ENCODE measurements at regions of chr13 and their contacts with region 1.

Region 1: GRCh38 chr13:40329657-40330485 is 336.6 kb downstream of the FOXO1 start:
- DNase-seq: no peak
- H3K4me3 ChIP-seq: no peak overlapping the region
- H3K27ac ChIP-seq: no peak overlapping the region
- H3K4me1 ChIP-seq: peaks cover 18% of the 10 kb centered on the region
- H3K27me3 ChIP-seq: no peaks in the 10 kb centered on the region
- CTCF ChIP-seq: no peak

Region 2: GRCh38 chr13:39577838-39578491 is 751.9 kb before region 1 on chr13:
- CTCF ChIA-PET with region 1: no interaction called
- dilution Hi-C with region 1: no loop called
- in situ Hi-C with region 1: no loop called
- intact Hi-C with region 1: no loop called
- DNase-seq: no peak
- H3K4me3 ChIP-seq: no peak overlapping the region
- H3K27ac ChIP-seq: no peak overlapping the region
- H3K4me1 ChIP-seq: no peaks in the 10 kb centered on the region
- H3K27me3 ChIP-seq: no peaks in the 10 kb centered on the region
- CTCF ChIP-seq: no peak

Region 3: DNA sequence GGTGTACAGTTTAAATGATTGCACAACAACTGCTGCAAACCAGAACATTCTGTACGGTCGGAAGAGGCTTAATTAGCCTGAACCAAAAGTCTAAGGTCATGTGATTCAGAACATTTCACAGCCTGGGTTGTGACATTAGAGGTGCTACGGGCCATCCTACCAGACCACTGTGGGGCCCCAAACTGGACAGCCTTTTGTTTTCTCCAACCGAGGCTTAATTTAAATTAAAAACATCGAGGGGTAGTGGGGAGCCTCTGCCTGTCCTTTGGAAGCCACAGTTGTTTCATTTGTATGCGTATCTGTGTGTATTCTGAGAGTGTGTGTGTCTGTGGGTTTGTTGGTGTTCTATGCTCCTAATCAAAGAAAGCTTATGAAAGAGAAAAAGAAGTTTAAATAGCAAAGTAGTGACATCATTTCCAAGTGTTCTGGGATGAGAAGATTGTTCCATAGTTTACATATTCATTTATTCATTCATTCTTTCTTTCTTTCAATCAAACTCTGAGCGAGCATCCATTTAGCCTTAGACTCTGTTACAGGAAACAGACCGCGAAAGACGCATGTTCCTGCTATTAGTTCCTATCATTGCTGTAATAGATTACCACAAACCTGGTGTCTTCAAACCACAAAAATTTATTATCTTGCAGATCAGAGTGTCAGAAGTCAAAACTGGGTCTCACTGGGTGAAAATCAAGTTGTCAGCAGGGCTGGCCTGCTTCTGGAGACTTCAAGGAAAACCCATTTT is 108.2 kb before region 1 on chr13:
- CTCF ChIA-PET with region 1: no interaction called
- dilution Hi-C with region 1: no loop called
- in situ Hi-C with region 1: no loop called
- intact Hi-C with region 1: loop called (anchors 5 kb)
- DNase-seq: peak; percentile 83
- H3K4me3 ChIP-seq: no peak overlapping the region
- H3K27ac ChIP-seq: peak overlapping the region; percentile 56
- H3K4me1 ChIP-seq: peaks cover 19% of the 10 kb centered on the region
- H3K27me3 ChIP-seq: no peaks in the 10 kb centered on the region
- CTCF ChIP-seq: no peak

Region 4: GRCh38 chr13:40283666-40284065 is 46.2 kb before region 1 on chr13:
- CTCF ChIA-PET with region 1: interaction called, 4 read pairs
- dilution Hi-C with region 1: no loop called
- in situ Hi-C with region 1: no loop called
- intact Hi-C with region 1: loop called (anchors 5 kb)
- DNase-seq: peak; percentile 68
- H3K4me3 ChIP-seq: no peak overlapping the region
- H3K27ac ChIP-seq: no peak overlapping the region
- H3K4me1 ChIP-seq: peaks cover 16% of the 10 kb centered on the region
- H3K27me3 ChIP-seq: no peaks in the 10 kb centered on the region
- CTCF ChIP-seq: no peak

Region 5: GRCh38 chr13:40401911-40402776 is 72.3 kb after region 1 on chr13:
- CTCF ChIA-PET with region 1: no interaction called
- dilution Hi-C with region 1: no loop called
- in situ Hi-C with region 1: no loop called
- intact Hi-C with region 1: loop called (anchors 2 kb)
- DNase-seq: peak; percentile 89
- H3K4me3 ChIP-seq: no peak overlapping the region
- H3K27ac ChIP-seq: no peak overlapping the region
- H3K4me1 ChIP-seq: peaks cover 24% of the 10 kb centered on the region
- H3K27me3 ChIP-seq: no peaks in the 10 kb centered on the region
- CTCF ChIP-seq: no peak

Measured in mammary epithelial cell (primary cell).